ENCODE measurements at regions of chr1 and their contacts with region 1.

Region 1: GRCh38 chr1:92754000-92754718 is 30.7 kb downstream of the EVI5 start:
- DNase-seq: no peak
- H3K4me3 ChIP-seq: no peak overlapping the region
- H3K27ac ChIP-seq: no peak overlapping the region
- H3K4me1 ChIP-seq: no peaks in the 10 kb centered on the region
- H3K27me3 ChIP-seq: no peaks in the 10 kb centered on the region
- CTCF ChIP-seq: no peak
- POLR2A ChIP-seq: no peak

Region 2: GRCh38 chr1:92691925-92692324 is 62.2 kb before region 1 on chr1:
- intact Hi-C with region 1: no loop called
- DNase-seq: no peak
- H3K4me3 ChIP-seq: no peak overlapping the region
- H3K27ac ChIP-seq: no peak overlapping the region
- H3K4me1 ChIP-seq: no peaks in the 10 kb centered on the region
- H3K27me3 ChIP-seq: no peaks in the 10 kb centered on the region
- CTCF ChIP-seq: no peak
- POLR2A ChIP-seq: no peak

Region 3: DNA sequence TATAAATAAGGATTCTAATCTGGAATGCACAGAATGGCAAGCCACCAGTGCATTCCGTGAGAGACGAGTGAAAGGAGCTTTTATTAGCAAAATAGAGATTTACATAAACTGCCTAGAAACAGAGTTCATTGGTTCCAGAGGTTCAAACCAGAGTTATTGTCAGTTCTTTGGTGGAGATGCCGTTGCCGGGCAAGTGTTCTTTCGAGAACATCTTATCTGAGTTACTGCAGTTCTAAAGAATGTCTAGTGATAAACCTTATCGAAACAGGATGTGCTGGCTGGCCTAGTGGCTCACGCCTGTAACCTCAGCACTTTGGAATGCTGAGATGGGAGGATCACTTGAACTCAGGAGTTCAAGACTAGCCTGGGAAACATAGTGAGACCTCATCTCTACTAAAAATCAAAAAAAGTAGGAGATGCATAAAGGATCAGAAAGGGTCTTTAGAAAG is 50.6 kb after region 1 on chr1:
- intact Hi-C with region 1: no loop called
- DNase-seq: peak; percentile 21
- H3K4me3 ChIP-seq: no peak overlapping the region
- H3K27ac ChIP-seq: no peak overlapping the region
- H3K4me1 ChIP-seq: no peaks in the 10 kb centered on the region
- H3K27me3 ChIP-seq: no peaks in the 10 kb centered on the region
- CTCF ChIP-seq: no peak
- POLR2A ChIP-seq: no peak

Region 4: GRCh38 chr1:92817986-92818764 is 64.0 kb after region 1 on chr1:
- intact Hi-C with region 1: loop called (anchors 10 kb)
- DNase-seq: no peak
- H3K4me3 ChIP-seq: no peak overlapping the region
- H3K27ac ChIP-seq: no peak overlapping the region
- H3K4me1 ChIP-seq: no peaks in the 10 kb centered on the region
- H3K27me3 ChIP-seq: no peaks in the 10 kb centered on the region
- CTCF ChIP-seq: peak in 2 of 4 experiments; percentile 52 to 58
- POLR2A ChIP-seq: no peak

Measured in prostate gland (tissue), 2 donors.